B cell (primary cell): ENCODE measurements at regions of chr1 and their contacts with region 1.

Region 1: GRCh38 chr1:167533851-167534300 is 15.5 kb upstream of the CD247 start:
- DNase-seq: peak; percentile 73
- ATAC-seq: peak; percentile 68
- H3K4me3 ChIP-seq: no peak overlapping the region
- H3K4me3 Mint-ChIP-seq: no peak overlapping the region
- H3K27ac ChIP-seq: no peak overlapping the region
- H3K27ac Mint-ChIP-seq: no peak overlapping the region
- H3K4me1 ChIP-seq: no peaks in the 10 kb centered on the region
- H3K4me1 Mint-ChIP-seq: peaks cover 5% of the 10 kb centered on the region
- H3K27me3 ChIP-seq: peaks cover 0 to 4% (median 0%) of the 10 kb centered on the region in 4 experiments
- H3K27me3 Mint-ChIP-seq: no peaks in the 10 kb centered on the region
- CTCF ChIP-seq: peak; percentile 94

Region 2: DNA sequence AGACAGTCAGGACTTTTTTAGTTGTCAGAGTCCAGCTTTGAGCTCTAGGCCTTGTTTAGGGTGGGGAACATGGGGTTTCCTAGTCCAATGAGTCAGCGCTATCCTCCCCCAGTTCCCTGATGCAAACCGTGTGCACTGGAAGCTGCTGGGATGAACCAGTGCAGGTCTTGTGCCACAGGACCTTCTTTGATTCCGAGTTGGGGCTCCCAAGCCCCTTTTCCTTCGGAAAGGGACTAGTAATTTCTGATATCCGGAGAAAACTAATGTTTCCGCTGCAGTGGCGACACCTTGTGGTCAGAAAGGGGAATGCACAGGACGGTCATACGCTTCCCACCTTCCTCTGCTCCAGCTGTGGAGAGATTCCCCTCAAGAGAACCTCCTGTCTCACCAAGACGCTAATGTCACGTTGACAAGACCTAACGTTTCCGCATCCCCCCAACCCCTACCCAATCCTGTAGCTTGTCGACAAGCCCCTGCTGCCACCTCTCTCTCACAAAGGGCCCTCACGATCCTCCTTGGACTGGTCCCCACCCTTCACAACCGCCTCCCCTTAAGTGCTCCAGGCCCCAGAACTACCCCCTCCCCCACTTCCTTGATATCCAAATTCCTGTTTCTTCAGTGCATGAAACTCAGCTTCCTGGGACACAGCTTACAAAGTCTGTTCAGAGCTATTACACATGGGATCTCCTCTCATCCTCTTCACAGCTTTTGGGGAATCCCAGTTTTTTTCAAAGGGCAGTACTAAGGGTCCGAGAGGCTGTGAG is 474.6 kb before region 1 on chr1:
- CTCF ChIA-PET with region 1: interaction called, 32 read pairs
- POLR2A ChIA-PET with region 1: no interaction called
- intact Hi-C with region 1: no loop called
- DNase-seq: peak; percentile 79
- ATAC-seq: peak; percentile 79
- H3K4me3 ChIP-seq: no peak overlapping the region
- H3K4me3 Mint-ChIP-seq: no peak overlapping the region
- H3K27ac ChIP-seq: no peak overlapping the region
- H3K27ac Mint-ChIP-seq: no peak overlapping the region
- H3K4me1 ChIP-seq: peaks cover 3 to 6% of the 10 kb centered on the region in 2 donors
- H3K4me1 Mint-ChIP-seq: peaks cover 4% of the 10 kb centered on the region
- H3K27me3 ChIP-seq: peaks cover 0 to 10% (median 0%) of the 10 kb centered on the region in 4 experiments
- H3K27me3 Mint-ChIP-seq: peaks cover 3% of the 10 kb centered on the region
- CTCF ChIP-seq: peak; percentile 99

Region 3: DNA sequence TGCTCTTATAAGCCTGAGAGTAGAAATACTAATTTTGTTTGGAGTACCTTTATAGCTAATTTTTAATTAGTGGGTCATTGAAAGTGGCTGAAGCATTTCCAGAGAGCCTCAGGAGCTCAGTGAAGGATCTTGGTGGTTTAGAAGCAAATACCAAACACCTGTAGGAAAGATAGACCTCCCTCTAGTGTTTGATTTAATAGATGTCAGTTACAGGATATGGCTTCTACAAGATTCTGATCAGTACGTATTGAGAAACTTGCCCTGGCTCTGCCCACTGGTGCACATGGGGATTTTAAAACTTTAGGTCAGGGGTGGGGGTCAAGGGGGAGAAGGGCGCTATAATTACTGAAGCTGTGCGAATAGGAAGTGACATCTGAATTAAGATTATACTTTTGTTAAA is 191.0 kb before region 1 on chr1:
- CTCF ChIA-PET with region 1: interaction called, 10 read pairs
- POLR2A ChIA-PET with region 1: no interaction called
- intact Hi-C with region 1: no loop called
- DNase-seq: peak; percentile 61
- ATAC-seq: peak; percentile 58
- H3K4me3 ChIP-seq: no peak overlapping the region
- H3K4me3 Mint-ChIP-seq: no peak overlapping the region
- H3K27ac ChIP-seq: no peak overlapping the region
- H3K27ac Mint-ChIP-seq: no peak overlapping the region
- H3K4me1 ChIP-seq: peaks cover 4 to 7% of the 10 kb centered on the region in 2 donors
- H3K4me1 Mint-ChIP-seq: peaks cover 17% of the 10 kb centered on the region
- H3K27me3 ChIP-seq: no peaks in the 10 kb centered on the region
- H3K27me3 Mint-ChIP-seq: no peaks in the 10 kb centered on the region
- CTCF ChIP-seq: peak; percentile 68

Region 4: GRCh38 chr1:167416506-167416905 is 117.4 kb before region 1 on chr1:
- CTCF ChIA-PET with region 1: interaction called, 11 read pairs
- POLR2A ChIA-PET with region 1: no interaction called
- intact Hi-C with region 1: no loop called
- DNase-seq: no peak
- ATAC-seq: no peak
- H3K4me3 ChIP-seq: no peak overlapping the region
- H3K4me3 Mint-ChIP-seq: no peak overlapping the region
- H3K27ac ChIP-seq: no peak overlapping the region
- H3K27ac Mint-ChIP-seq: no peak overlapping the region
- H3K4me1 ChIP-seq: peaks cover 7 to 13% of the 10 kb centered on the region in 2 donors
- H3K4me1 Mint-ChIP-seq: peaks cover 24% of the 10 kb centered on the region
- H3K27me3 ChIP-seq: no peaks in the 10 kb centered on the region
- H3K27me3 Mint-ChIP-seq: no peaks in the 10 kb centered on the region
- CTCF ChIP-seq: no peak

Region 5: DNA sequence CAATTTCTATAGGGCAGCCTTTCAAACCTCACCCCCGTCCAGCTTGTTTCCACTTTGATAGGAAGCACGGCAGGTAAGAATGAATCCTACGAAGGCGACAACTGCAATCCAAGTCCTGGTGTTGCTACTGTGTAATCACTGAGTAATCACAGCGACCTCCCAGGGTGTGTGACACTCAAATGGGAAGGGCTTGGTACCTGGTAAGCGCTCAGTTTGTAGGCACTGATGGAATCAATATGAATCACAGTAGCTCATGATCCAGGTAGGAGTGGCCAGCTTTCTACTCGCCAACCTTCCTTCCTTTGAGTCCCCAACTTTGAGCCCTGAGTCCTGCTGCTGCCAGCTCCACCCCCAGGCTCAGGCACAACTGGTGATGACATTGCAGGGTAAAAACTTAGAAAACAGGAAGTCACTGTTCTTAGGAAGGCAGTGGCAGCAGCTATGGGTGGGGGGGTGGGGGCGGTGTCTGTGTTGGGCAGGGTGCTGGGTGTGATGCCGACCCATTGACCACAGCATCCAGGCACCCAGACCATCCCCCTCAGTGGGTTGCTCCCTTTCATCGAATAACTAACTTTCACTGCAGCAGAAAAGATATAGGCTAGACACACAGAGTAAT is 86.2 kb before region 1 on chr1:
- CTCF ChIA-PET with region 1: interaction called, 59 read pairs
- POLR2A ChIA-PET with region 1: no interaction called
- intact Hi-C with region 1: loop called (anchors 1 kb)
- DNase-seq: peak; percentile 70
- ATAC-seq: peak; percentile 96
- H3K4me3 ChIP-seq: peak overlapping the region in 3 of 5 experiments; percentile 4 to 37 (median 6)
- H3K4me3 Mint-ChIP-seq: peak overlapping the region; percentile 70
- H3K27ac ChIP-seq: no peak overlapping the region
- H3K27ac Mint-ChIP-seq: peak overlapping the region; percentile 80
- H3K4me1 ChIP-seq: peaks cover 13 to 28% of the 10 kb centered on the region in 2 donors
- H3K4me1 Mint-ChIP-seq: peaks cover 22% of the 10 kb centered on the region
- H3K27me3 ChIP-seq: no peaks in the 10 kb centered on the region
- H3K27me3 Mint-ChIP-seq: no peaks in the 10 kb centered on the region
- CTCF ChIP-seq: no peak

Region 6: DNA sequence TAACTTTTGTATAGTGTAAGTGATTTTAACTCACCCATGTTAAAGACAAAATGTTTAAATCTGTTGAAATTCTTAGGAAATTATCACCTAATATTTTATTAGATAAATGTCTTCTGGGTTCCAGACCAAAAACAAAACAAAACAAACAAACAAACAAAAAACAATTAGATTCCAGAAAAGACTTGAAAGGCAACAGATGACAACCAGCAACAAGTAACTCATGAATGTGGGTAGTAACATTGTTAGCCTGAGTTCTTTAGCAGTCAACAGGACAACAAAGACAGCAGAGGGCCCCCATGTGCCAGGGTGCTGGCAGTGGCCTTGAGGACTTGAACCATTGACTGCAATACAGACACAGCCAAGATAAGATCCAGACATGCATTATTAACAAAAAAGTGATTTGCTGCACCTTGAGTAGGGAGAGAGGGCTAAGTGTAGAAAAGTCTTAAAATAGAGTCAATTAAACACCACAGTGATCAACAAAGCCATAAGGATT is 13.1 kb before region 1 on chr1:
- CTCF ChIA-PET with region 1: interaction called, 20 read pairs
- POLR2A ChIA-PET with region 1: no interaction called
- intact Hi-C with region 1: no loop called
- DNase-seq: no peak
- ATAC-seq: no peak
- H3K4me3 ChIP-seq: no peak overlapping the region
- H3K4me3 Mint-ChIP-seq: no peak overlapping the region
- H3K27ac ChIP-seq: no peak overlapping the region
- H3K27ac Mint-ChIP-seq: no peak overlapping the region
- H3K4me1 ChIP-seq: no peaks in the 10 kb centered on the region
- H3K4me1 Mint-ChIP-seq: peaks cover 2% of the 10 kb centered on the region
- H3K27me3 ChIP-seq: peaks cover 0 to 17% (median 1%) of the 10 kb centered on the region in 4 experiments
- H3K27me3 Mint-ChIP-seq: peaks cover 47% of the 10 kb centered on the region
- CTCF ChIP-seq: no peak

Region 7: DNA sequence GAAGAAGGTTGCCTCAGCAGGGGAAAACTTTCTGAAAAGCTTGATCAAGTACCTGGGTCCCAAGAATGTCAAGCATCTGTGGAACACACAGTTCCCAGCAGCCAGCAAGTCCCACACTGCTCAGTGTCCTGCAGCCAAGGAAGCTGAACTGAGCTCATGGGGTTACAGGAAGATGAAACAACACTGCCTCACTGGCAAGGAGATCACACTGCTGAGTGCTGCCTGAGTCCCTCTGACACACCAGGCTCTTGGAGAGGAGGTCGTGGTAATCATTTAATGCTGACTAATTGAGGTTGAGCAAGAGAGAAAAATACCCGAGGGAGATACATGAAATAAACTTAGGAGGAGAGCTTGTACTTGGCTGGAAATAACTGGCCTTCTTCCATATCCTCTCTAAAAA is 263.1 kb after region 1 on chr1:
- CTCF ChIA-PET with region 1: no interaction called
- POLR2A ChIA-PET with region 1: no interaction called
- intact Hi-C with region 1: no loop called
- DNase-seq: no peak
- ATAC-seq: no peak
- H3K4me3 ChIP-seq: no peak overlapping the region
- H3K4me3 Mint-ChIP-seq: no peak overlapping the region
- H3K27ac ChIP-seq: no peak overlapping the region
- H3K27ac Mint-ChIP-seq: no peak overlapping the region
- H3K4me1 ChIP-seq: no peaks in the 10 kb centered on the region
- H3K4me1 Mint-ChIP-seq: no peaks in the 10 kb centered on the region
- H3K27me3 ChIP-seq: no peaks in the 10 kb centered on the region
- H3K27me3 Mint-ChIP-seq: no peaks in the 10 kb centered on the region
- CTCF ChIP-seq: no peak